A673 (cell line): ENCODE measurements at regions of chr19 and their contacts with region 1.

Region 1: DNA sequence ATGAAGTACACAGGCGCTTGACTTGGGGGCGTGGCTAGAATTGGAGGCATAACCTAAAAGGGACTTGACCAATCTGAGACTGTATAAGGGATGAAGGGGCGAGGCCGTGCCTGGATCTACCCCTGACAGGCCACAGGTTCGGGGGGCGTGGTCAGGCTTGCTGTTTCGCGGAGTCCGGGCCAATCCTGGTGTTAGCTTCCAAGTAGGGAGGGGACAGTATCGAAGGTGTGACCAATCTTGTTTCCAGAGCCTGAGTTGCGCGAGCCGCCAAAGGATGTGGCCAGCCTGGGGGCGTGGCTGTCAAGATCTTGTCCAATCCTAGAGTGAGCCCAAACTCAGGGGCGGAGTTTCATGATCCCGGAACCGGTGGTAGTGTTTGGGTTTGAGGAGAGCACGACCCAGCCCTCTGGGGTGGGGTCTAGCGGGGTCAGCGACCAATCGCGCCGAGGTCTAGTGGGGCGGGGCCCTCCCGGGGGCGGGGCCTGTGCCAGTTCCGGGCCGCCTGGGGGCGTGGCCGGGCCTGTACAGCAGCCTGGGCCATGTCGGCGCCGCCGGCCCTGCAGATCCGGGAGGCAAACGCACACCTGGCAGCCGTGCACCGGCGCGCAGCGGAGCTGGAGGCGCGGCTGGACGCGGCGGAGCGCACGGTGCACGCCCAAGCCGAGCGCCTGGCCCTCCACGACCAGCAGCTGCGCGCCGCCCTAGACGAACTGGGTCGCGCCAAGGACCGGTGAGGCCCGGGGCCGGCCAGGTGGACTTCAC is at the start of gene VMAC:
- DNase-seq: peak; percentile 100
- H3K4me3 ChIP-seq: peak within 1 kb of the TSS; percentile 95
- H3K27ac ChIP-seq: peak within 1 kb of the TSS; percentile 96
- H3K4me1 ChIP-seq: peaks cover 8% of the 10 kb centered on the region
- H3K27me3 ChIP-seq: no peaks in the 10 kb centered on the region
- CTCF ChIP-seq: no peak
- total RNA-seq, gene VMAC: 0.67 and 1.7 TPM in 2 replicates

Region 2: DNA sequence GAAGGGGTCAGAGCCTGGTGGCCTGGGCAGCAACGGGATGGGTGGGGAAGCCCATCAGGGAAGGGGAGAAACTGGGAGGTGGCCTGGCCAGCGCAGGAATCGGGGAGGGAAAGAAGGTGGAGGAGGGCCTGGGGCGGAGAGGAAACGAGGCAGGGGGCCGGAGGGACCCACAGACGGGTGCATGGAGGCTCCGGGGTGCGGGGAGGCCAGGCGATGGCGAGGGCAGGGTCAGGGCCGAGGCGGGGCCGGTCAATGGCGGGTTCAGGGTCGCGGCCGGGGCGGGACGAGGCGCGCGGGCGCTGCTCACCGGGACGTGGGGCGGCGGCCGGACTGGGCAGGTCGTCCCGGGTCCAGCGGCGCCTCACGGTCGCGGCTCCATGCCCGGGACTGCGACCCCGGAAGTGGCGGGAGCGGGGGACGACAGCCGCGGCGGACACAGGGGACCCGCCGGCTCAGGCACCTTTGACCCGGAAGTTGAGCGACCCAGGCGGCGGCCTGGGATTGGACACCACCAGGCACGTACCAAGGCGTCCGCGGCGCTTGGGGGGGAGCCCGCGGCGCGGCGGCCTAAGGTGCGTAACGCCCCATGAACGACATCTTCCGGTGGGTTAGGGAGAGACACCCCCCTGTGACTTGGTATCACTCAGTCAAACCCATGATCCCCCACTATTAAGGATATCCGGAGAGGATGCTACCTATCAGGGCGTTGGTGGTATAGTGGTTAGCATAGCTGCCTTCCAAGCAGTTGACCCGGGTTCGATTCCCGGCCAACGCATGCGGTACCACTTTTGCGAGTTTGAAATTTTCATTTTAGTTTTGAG is 1181.0 kb before region 1 on chr19 and contains the start of gene DPP9:
- CTCF ChIA-PET with region 1: no interaction called
- POLR2A ChIA-PET with region 1: interaction called, 22 read pairs
- intact Hi-C with region 1: no loop called
- DNase-seq: peak; percentile 99
- H3K4me3 ChIP-seq: peak within 1 kb of the TSS; percentile 98
- H3K27ac ChIP-seq: peak within 1 kb of the TSS; percentile 91
- H3K4me1 ChIP-seq: peaks cover 13% of the 10 kb centered on the region
- H3K27me3 ChIP-seq: no peaks in the 10 kb centered on the region
- CTCF ChIP-seq: no peak
- total RNA-seq, gene DPP9: 60.2 and 65.7 TPM in 2 replicates

Region 3: DNA sequence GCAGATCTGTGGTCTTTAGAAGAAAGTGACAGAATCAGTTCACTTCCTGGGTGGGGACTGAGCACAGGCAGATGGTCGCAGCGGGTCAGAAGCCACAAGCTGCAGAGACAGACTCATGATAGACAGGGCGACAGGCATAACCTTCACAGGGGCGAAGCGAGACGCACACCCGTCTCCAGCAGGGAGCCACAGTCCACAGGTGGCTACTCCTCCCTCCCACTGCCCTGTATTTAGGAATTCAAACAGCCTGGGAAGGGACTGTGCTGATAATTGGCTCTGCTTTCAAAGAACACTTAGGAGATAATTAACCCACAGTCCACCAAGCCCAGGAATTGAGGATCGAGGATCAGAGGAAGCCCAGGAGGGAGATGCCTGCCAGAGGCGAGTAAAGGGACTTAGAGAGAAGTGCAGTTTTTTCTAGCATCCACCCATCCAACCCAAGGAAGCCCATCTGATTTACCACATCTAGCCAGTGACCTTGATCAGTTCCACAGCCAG is 182.6 kb after region 1 on chr19:
- CTCF ChIA-PET with region 1: no interaction called
- POLR2A ChIA-PET with region 1: no interaction called
- intact Hi-C with region 1: no loop called
- DNase-seq: no peak
- H3K4me3 ChIP-seq: no peak overlapping the region
- H3K27ac ChIP-seq: no peak overlapping the region
- H3K4me1 ChIP-seq: peaks cover 29% of the 10 kb centered on the region
- H3K27me3 ChIP-seq: no peaks in the 10 kb centered on the region
- CTCF ChIP-seq: no peak